ENCODE measurements at regions of chr1 and their contacts with region 1.

Region 1: GRCh38 chr1:11979851-11980675 is at the start of gene MFN2:
- DNase-seq: peak; percentile 98
- ATAC-seq: peak; percentile 91
- H3K4me3 ChIP-seq: peak within 1 kb of the TSS; percentile 66 to 86 (median 81)
- H3K4me3 Mint-ChIP-seq: peak within 1 kb of the TSS; percentile 95
- H3K27ac ChIP-seq: peak within 1 kb of the TSS; percentile 81 to 94
- H3K27ac Mint-ChIP-seq: peak within 1 kb of the TSS; percentile 95
- H3K4me1 ChIP-seq: peaks cover 12 to 16% of the 10 kb centered on the region in 2 donors
- H3K4me1 Mint-ChIP-seq: peaks cover 40% of the 10 kb centered on the region
- H3K27me3 ChIP-seq: no peaks in the 10 kb centered on the region
- H3K27me3 Mint-ChIP-seq: no peaks in the 10 kb centered on the region
- CTCF ChIP-seq: no peak
- total RNA-seq, gene MFN2: 41.7 and 50.0 TPM in 2 replicates

Region 2: GRCh38 chr1:11535761-11536572 is 444.1 kb before region 1 on chr1:
- CTCF ChIA-PET with region 1: no interaction called
- POLR2A ChIA-PET with region 1: no interaction called
- intact Hi-C with region 1: no loop called
- DNase-seq: no peak
- ATAC-seq: no peak
- H3K4me3 ChIP-seq: no peak overlapping the region
- H3K4me3 Mint-ChIP-seq: no peak overlapping the region
- H3K27ac ChIP-seq: no peak overlapping the region
- H3K27ac Mint-ChIP-seq: no peak overlapping the region
- H3K4me1 ChIP-seq: no peaks in the 10 kb centered on the region
- H3K4me1 Mint-ChIP-seq: no peaks in the 10 kb centered on the region
- H3K27me3 ChIP-seq: no peaks in the 10 kb centered on the region
- H3K27me3 Mint-ChIP-seq: peaks cover 14% of the 10 kb centered on the region
- CTCF ChIP-seq: no peak

Region 3: GRCh38 chr1:11629184-11630016 is 350.7 kb before region 1 on chr1:
- CTCF ChIA-PET with region 1: no interaction called
- POLR2A ChIA-PET with region 1: no interaction called
- intact Hi-C with region 1: no loop called
- DNase-seq: no peak
- ATAC-seq: no peak
- H3K4me3 ChIP-seq: no peak overlapping the region
- H3K4me3 Mint-ChIP-seq: no peak overlapping the region
- H3K27ac ChIP-seq: no peak overlapping the region
- H3K27ac Mint-ChIP-seq: no peak overlapping the region
- H3K4me1 ChIP-seq: peaks cover 0 to under 1% of the 10 kb centered on the region in 2 donors
- H3K4me1 Mint-ChIP-seq: peaks cover 5% of the 10 kb centered on the region
- H3K27me3 ChIP-seq: peaks cover 0 to 20% (median 0%) of the 10 kb centered on the region in 4 experiments
- H3K27me3 Mint-ChIP-seq: peaks cover 40% of the 10 kb centered on the region
- CTCF ChIP-seq: no peak

Region 4: DNA sequence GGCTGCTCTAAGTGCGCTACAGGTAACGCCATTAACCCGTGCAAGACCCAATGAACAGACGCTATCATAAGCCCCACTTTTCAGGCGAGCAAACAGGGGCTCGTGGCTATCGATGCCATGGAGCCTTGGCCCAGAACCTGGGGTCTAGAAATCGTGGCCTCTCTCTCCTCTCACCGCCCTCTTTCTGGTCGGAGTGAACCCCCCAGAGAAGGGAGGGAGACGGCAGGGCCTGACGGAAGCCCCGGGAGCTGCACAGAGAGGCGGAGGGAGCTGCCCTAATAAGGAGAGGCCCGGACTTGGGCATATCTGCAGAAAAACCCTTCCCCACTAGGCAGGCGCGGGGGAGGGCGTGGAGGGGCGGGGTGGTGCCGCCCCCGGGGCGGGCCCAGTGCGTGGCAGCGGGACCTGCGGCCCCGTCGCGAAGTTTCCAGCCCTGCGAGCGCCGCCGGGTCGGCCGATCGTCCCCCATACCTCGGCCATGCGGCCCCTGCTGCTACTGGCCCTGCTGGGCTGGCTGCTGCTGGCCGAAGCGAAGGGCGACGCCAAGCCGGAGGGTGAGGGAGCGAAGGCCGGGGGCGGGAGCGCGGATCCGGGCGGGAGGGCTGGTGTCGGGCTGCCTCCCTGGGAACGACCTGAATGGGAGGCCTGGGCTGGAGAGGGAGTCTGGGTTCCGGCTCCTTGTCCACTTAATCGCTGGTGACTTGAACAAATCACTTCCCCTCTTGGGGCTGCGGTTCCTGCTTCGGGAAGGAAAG is 45.6 kb before region 1 on chr1 and contains the start of gene PLOD1:
- CTCF ChIA-PET with region 1: no interaction called
- POLR2A ChIA-PET with region 1: interaction called, 4 read pairs
- intact Hi-C with region 1: loop called (anchors 1 kb)
- DNase-seq: peak; percentile 85
- ATAC-seq: peak; percentile 100
- H3K4me3 ChIP-seq: peak within 1 kb of the TSS; percentile 45 to 82 (median 71)
- H3K4me3 Mint-ChIP-seq: peak within 1 kb of the TSS; percentile 90
- H3K27ac ChIP-seq: peak within 1 kb of the TSS; percentile 38 to 69
- H3K27ac Mint-ChIP-seq: peak within 1 kb of the TSS; percentile 74
- H3K4me1 ChIP-seq: peaks cover 9 to 12% of the 10 kb centered on the region in 2 donors
- H3K4me1 Mint-ChIP-seq: peaks cover 8% of the 10 kb centered on the region
- H3K27me3 ChIP-seq: no peaks in the 10 kb centered on the region
- H3K27me3 Mint-ChIP-seq: no peaks in the 10 kb centered on the region
- CTCF ChIP-seq: no peak
- total RNA-seq, gene PLOD1: 9.6 and 13.4 TPM in 2 replicates